Activated T-helper 2 cell treated with anti-CD3 and anti-CD28 coated beads, Interferon-gamma antibody, Interleukin-2, Interleukin-4, amounts not matched to agents 10 μg/mL and 5 μg/mL and 100 μg/mL, durations not matched to agents 14 hours and 24 hours and 36 hours (primary cell): ENCODE measurements at regions of chr19 and their contacts with region 1.

Region 1: GRCh38 chr19:17784201-17785008 is 10.5 kb upstream of the B3GNT3 start:
- DNase-seq: peak; percentile 59
- H3K4me3 Mint-ChIP-seq: no peak overlapping the region
- H3K27ac Mint-ChIP-seq: no peak overlapping the region
- H3K4me1 Mint-ChIP-seq: peaks cover 3% of the 10 kb centered on the region
- H3K27me3 Mint-ChIP-seq: no peaks in the 10 kb centered on the region

Region 2: GRCh38 chr19:17703824-17704463 is 80.5 kb before region 1 on chr19:
- intact Hi-C with region 1: loop called (anchors 2 kb)
- DNase-seq: peak; percentile 50
- H3K4me3 Mint-ChIP-seq: no peak overlapping the region
- H3K27ac Mint-ChIP-seq: no peak overlapping the region
- H3K4me1 Mint-ChIP-seq: peaks cover 2% of the 10 kb centered on the region
- H3K27me3 Mint-ChIP-seq: peaks cover 2% of the 10 kb centered on the region